ENCODE measurements at regions of chr11 and their contacts with region 1.

Region 1: DNA sequence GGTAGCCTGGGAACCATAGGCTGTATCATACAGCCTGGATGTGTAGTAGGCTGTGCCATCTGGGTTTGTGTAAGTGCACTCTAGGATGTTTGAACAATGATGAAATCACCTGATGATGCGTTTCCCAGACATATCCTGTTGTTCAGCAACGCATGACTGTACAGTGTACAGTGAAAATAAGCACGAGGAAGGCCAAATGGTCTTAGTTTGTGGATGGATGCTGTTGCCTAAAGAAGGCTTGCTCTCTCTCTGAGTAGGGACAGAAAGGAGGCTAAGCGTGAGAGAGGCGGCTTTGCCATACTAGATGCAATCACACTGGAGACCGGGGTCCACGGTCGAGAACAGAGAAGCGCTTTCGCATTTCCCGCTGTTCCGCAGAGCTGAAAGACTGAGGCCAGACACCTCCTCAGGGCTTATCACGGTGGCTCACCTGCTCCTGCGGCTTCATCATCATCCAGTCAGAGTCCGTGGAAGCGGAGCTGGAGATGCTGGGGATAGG is 27.6 kb upstream of the APLP2 start:
- DNase-seq: peak; percentile 95
- H3K4me3 ChIP-seq: no peak overlapping the region
- H3K27ac ChIP-seq: peak overlapping the region; percentile 88
- H3K4me1 ChIP-seq: peaks cover 17% of the 10 kb centered on the region
- H3K27me3 ChIP-seq: no peaks in the 10 kb centered on the region
- CTCF ChIP-seq: no peak
- POLR2A ChIP-seq: no peak

Region 2: DNA sequence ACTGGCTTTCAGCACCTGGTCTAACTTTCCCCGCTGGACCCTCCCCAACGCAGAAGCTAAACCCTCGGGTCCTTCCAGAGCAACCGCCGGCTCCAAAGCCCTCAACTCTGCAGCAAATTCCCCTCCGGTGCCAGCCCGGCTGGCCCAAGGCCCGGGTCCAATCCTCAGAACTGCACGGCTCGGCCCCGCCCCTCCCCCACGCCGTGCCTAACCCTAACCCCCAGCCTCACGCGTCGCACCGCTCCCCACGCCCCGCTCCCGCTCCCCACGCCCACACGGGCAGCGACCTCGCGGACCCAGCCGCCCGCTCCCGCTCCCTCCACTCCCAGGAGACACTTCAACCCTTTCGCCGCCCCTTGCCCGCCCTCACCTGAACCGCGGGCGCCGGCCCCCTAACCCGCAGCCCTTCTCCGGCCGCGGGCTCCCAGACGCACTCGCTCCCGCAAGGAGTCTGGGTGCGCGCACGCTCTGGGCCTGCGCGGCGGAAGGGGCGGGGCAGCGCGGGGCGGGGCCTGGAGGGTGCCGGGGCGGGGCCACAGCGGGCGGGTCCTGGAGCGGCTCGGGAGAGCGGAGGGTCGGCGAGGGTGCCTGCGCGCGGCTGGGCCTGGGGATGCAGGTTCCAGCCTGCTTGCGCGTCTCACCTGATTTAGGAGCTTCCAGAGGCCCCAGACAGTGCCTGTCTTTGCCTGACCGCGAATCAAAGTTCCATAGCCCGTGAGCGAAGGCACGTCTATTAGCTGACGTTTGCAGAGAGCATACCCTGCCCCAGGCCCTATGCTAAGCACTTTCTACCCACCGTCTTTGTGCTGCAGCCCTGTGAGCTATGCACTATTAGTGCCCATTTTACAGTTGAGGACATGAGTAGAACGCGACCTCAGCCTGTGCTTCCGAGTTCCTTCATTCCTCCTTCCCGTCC is 146.8 kb before region 1 on chr11 and contains the start of gene NFRKB:
- CTCF ChIA-PET with region 1: no interaction called
- POLR2A ChIA-PET with region 1: no interaction called
- dilution Hi-C with region 1: no loop called
- intact Hi-C with region 1: no loop called
- DNase-seq: peak; percentile 84
- H3K4me3 ChIP-seq: peak within 1 kb of the TSS; percentile 72 to 95 (median 93)
- H3K27ac ChIP-seq: no peak within 1 kb of the TSS
- H3K4me1 ChIP-seq: peaks cover 9% of the 10 kb centered on the region
- H3K27me3 ChIP-seq: no peaks in the 10 kb centered on the region
- CTCF ChIP-seq: no peak
- POLR2A ChIP-seq: peak; percentile 83
- total RNA-seq, gene NFRKB: 30.1 and 30.6 TPM in 2 replicates

Region 3: DNA sequence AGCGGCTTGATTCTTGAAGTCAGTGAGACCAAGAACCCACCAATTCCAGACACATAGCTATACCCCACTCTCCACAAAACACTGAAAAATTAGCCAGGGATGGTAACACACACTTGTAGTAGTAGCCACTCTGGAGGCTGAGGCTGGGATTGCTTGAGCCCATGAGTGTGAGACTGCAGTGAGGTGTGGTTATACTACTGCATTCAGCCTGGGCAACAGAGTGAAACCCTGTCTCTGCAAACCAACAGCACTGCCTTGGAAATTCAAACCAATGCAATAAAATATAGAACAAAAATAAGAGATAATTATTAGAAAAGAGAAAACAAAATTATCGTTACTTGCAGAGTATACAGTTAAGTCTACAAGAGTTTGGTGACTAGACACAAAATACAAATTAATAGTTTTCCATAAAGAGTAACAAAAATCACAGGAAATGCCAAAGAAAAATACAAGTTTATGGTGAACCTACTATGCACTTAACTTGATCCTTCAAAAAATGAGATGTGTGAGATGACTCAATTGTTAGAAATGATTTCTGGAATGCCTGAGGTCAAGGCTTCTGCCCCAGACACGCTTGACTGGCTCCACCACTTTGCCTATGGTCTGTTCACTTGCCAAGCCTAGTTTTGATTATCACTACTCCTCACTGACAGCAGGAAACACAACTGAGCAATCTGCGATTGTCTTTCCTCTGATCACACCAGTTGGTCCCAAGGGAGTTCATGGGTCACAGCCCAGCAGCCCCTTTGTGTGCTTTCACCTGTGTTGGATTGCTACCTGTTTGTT is 19.2 kb before region 1 on chr11:
- CTCF ChIA-PET with region 1: no interaction called
- POLR2A ChIA-PET with region 1: interaction called, 9 read pairs
- dilution Hi-C with region 1: no loop called
- intact Hi-C with region 1: loop called (anchors 1 kb)
- DNase-seq: peak; percentile 56
- H3K4me3 ChIP-seq: no peak overlapping the region
- H3K27ac ChIP-seq: peak overlapping the region; percentile 87
- H3K4me1 ChIP-seq: peaks cover 18% of the 10 kb centered on the region
- H3K27me3 ChIP-seq: no peaks in the 10 kb centered on the region
- CTCF ChIP-seq: no peak
- POLR2A ChIP-seq: no peak

Region 4: GRCh38 chr11:130052567-130052966 is 10.4 kb after region 1 on chr11:
- CTCF ChIA-PET with region 1: no interaction called
- POLR2A ChIA-PET with region 1: no interaction called
- dilution Hi-C with region 1: no loop called
- intact Hi-C with region 1: no loop called
- DNase-seq: no peak
- H3K4me3 ChIP-seq: no peak overlapping the region
- H3K27ac ChIP-seq: no peak overlapping the region
- H3K4me1 ChIP-seq: no peaks in the 10 kb centered on the region
- H3K27me3 ChIP-seq: no peaks in the 10 kb centered on the region
- CTCF ChIP-seq: no peak
- POLR2A ChIP-seq: no peak

Region 5: GRCh38 chr11:130124096-130124495 is 82.0 kb after region 1 on chr11:
- CTCF ChIA-PET with region 1: no interaction called
- POLR2A ChIA-PET with region 1: no interaction called
- dilution Hi-C with region 1: no loop called
- intact Hi-C with region 1: loop called (anchors 1 kb)
- DNase-seq: peak; percentile 72
- H3K4me3 ChIP-seq: no peak overlapping the region
- H3K27ac ChIP-seq: peak overlapping the region; percentile 60
- H3K4me1 ChIP-seq: peaks cover 54% of the 10 kb centered on the region
- H3K27me3 ChIP-seq: no peaks in the 10 kb centered on the region
- CTCF ChIP-seq: no peak
- POLR2A ChIP-seq: no peak

Region 6: DNA sequence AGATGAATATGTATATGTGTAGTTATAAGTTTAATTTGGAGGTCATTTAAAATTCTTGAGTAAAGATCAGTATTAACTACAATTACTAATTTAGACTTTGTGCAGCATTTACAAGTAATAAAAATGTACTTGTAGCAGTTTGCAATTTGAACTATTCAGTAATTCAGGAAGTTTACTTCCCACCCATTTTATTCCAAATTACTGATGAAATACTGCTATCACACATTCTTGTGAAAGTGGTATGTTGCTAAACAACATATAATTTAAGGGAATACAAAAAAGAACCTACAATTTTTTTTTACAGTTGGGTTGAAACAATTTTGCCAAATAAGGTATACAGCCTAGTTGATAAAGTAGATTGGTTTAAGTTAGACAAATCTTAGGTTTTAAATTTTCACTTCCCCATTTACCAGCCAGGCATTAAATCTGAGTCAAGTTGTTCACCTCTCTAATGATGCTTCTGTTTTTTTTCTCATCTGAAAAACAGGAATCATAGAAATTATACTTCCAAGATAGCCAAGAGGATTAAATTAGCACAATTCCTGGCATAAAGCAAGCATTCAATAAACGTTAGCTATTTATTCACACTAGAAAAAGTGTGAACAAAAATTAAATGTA is 227.3 kb after region 1 on chr11:
- CTCF ChIA-PET with region 1: no interaction called
- POLR2A ChIA-PET with region 1: no interaction called
- dilution Hi-C with region 1: no loop called
- intact Hi-C with region 1: no loop called
- DNase-seq: no peak
- H3K4me3 ChIP-seq: no peak overlapping the region
- H3K27ac ChIP-seq: no peak overlapping the region
- H3K4me1 ChIP-seq: no peaks in the 10 kb centered on the region
- H3K27me3 ChIP-seq: no peaks in the 10 kb centered on the region
- CTCF ChIP-seq: no peak
- POLR2A ChIP-seq: no peak

Measured in endothelial cell of umbilical vein (primary cell).